ENCODE measurements at regions of chr16 and their contacts with region 1.

Region 1: GRCh38 chr16:82715833-82716232 is 89.1 kb downstream of the CDH13 start:
- DNase-seq: peak; percentile 75 to 93
- ATAC-seq: peak; percentile 98 to 99
- H3K4me3 ChIP-seq: no peak overlapping the region
- H3K27ac ChIP-seq: peak overlapping the region; percentile 72 to 79 (median 76)
- H3K4me1 ChIP-seq: peaks cover 36% of the 10 kb centered on the region in 2 donors
- H3K27me3 ChIP-seq: no peaks in the 10 kb centered on the region
- CTCF ChIP-seq: no peak
- POLR2A ChIP-seq: no peak

Region 2: GRCh38 chr16:82626791-82627261 is 89.0 kb before region 1 on chr16 and contains the start of gene CDH13:
- in situ Hi-C with region 1: no loop called
- intact Hi-C with region 1: loop called (anchors 2 kb)
- DNase-seq: peak; percentile 18 to 40
- ATAC-seq: peak; percentile 7 to 16
- H3K4me3 ChIP-seq: peak within 1 kb of the TSS; percentile 58 to 79 (median 62)
- H3K27ac ChIP-seq: peak within 1 kb of the TSS; percentile 86 to 93 (median 88)
- H3K4me1 ChIP-seq: peaks cover 46 to 50% of the 10 kb centered on the region in 2 donors
- H3K27me3 ChIP-seq: no peaks in the 10 kb centered on the region
- CTCF ChIP-seq: no peak
- POLR2A ChIP-seq: peak; percentile 38 to 60
- total RNA-seq, gene CDH13: 5.8 to 36.7 (median 20.4) TPM

Region 3: DNA sequence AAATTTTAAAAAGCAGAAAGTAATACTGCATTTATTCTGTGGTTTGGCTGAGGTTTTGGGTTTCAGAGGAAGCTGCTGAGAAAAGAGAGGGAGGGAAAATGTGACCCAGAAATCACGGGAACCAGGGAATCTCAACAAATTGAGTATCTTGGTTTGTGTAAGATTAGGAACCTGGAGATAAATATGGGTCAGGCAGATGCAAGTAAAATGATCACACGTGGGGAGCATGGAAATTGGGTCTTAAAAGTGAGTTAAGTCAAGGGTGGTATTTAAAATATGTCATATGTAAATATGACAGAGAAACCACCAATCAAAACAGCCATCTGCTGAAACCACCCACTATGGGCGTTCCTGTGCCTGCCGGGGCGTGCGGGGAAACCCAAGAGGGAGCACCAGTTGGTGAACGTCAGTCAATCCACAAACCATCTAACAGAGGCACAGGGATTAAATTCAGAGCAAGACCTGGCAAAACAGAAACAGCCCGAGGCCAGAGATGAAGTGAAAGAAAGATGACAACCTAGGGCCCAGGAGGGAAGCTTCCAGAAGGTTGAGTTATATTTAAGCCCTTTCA is 55.7 kb before region 1 on chr16:
- in situ Hi-C with region 1: no loop called
- intact Hi-C with region 1: loop called (anchors 1 kb)
- DNase-seq: peak; percentile 86 to 93
- ATAC-seq: peak; percentile 93 to 96
- H3K4me3 ChIP-seq: peak overlapping the region; percentile 41 to 56 (median 47)
- H3K27ac ChIP-seq: peak overlapping the region; percentile 92 to 95 (median 94)
- H3K4me1 ChIP-seq: peaks cover 29 to 34% of the 10 kb centered on the region in 2 donors
- H3K27me3 ChIP-seq: no peaks in the 10 kb centered on the region
- CTCF ChIP-seq: no peak
- POLR2A ChIP-seq: peak; percentile 62 to 75

Region 4: GRCh38 chr16:82699711-82700495 is 15.9 kb before region 1 on chr16:
- in situ Hi-C with region 1: no loop called
- intact Hi-C with region 1: loop called (anchors 1 kb)
- DNase-seq: peak in 1 of 2 donors; percentile 14
- ATAC-seq: peak; percentile 87 to 93
- H3K4me3 ChIP-seq: peak overlapping the region in 1 of 4 donors; percentile 2
- H3K27ac ChIP-seq: peak overlapping the region; percentile 51 to 76 (median 69)
- H3K4me1 ChIP-seq: peaks cover 43 to 51% of the 10 kb centered on the region in 2 donors
- H3K27me3 ChIP-seq: no peaks in the 10 kb centered on the region
- CTCF ChIP-seq: no peak
- POLR2A ChIP-seq: no peak

Region 5: DNA sequence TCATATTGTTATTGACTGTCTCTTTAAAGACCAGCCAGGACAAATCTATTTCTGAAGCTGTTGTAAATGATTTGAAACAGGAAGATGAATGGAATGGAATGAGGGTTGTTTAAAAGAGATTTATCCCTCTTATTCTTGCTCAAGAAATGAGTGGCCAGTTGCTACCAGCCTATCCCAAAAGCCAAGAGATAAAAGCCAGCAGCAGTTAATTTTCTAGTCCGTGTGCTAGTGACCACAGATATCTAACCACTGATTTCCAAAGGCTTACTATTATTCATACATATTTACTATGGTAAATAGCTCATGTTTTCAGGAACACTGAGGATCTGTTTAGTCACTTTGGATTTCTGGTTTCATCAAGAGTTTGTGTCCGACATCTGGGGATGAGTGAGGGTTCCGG is 16.6 kb after region 1 on chr16:
- in situ Hi-C with region 1: no loop called
- intact Hi-C with region 1: loop called (anchors 2 kb)
- DNase-seq: no peak
- ATAC-seq: no peak
- H3K4me3 ChIP-seq: no peak overlapping the region
- H3K27ac ChIP-seq: peak overlapping the region; percentile 53 to 88 (median 86)
- H3K4me1 ChIP-seq: peaks cover 52 to 55% of the 10 kb centered on the region in 2 donors
- H3K27me3 ChIP-seq: no peaks in the 10 kb centered on the region
- CTCF ChIP-seq: no peak
- POLR2A ChIP-seq: no peak

Measured in gastrocnemius medialis (tissue), 4 donors.